MCF 10A (cell line): ENCODE measurements at regions of chr22 and their contacts with region 1.

Region 1: DNA sequence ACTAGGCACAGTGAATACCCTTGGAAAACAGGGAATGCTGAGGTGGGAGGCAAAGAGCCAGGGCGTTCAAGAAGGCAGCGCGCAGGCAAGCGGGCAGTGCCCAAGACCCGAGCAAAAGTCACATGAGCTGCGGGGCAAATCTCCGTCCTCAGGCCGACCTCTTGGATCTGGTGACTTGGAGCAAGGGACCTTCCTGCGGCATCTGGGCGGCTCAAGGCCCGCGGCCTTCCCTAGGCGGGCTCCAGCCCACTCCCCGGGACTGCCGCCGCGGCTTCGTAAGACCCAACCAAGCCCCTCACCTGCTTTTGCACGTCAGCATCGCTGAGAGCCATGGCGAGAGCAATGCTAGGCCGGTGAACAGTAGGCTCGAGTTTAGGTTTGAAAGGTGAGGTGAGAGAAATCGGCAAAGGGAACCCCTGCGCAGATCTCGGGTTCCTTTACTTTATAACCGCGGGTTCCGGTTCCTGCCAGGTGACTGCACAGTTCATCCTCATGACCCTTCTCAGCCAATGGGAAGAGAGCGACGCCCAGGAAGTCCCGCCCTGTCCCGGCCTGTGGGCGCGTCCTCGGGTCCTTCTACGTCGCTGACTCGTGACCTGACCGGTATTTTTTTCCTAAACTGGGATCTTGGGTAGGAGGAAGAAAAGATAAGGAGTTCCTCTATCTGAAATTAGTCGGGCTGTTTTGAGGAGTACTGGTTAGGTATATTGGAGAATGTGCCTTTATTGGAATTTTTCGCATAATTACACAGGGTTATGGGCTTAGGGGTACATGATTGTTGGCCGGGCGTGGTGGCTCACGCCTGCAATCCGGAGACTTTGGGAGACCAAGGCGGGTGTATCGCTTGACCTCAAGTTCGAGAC is at the start of gene ATP6V1E1:
- DNase-seq: peak; percentile 97
- H3K4me3 Mint-ChIP-seq: peak within 1 kb of the TSS; percentile 98
- H3K27ac Mint-ChIP-seq: peak within 1 kb of the TSS; percentile 98
- H3K4me1 Mint-ChIP-seq: peaks cover 7% of the 10 kb centered on the region
- H3K27me3 Mint-ChIP-seq: no peaks in the 10 kb centered on the region
- CTCF ChIP-seq: no peak
- total RNA-seq, gene ATP6V1E1: 86.4 and 114 TPM in 2 replicates

Region 2: DNA sequence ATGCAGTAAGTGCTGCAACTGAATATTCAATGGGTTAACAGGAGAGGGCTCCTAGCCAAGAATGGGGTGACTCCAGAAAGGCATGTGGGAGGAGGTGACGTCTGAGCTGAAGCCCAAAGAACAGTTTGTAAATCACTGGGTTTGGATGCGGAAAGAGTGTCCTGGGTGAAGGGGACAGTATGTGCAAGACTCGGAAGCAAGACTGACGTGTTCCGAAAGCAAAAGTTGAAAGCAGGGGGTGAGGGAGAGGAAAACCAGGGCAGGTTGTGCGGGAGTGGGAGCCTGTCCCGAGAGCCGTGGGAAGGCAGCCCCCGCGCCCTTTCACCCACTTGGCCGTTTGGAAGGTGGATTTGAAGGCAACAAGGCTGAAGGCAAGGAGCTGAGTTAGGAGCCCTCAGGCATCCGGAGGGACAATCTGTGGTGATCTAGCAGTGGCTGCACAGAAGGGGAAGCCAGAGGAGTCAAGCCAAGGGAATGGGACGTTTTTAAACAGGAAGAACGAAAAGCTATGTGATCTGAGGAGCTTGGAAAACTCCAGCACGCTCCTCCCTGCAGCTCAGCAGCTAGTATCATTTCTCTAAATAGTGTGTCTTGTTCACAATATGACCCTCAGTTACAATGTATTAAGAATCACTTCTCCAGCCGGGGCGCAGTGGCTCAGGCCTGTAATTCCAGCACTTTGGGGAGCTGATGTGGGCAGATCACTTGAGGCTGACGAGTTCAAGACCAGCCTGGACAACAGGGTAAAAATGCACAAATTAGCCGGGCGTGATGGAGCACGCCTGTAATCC is 57.5 kb before region 1 on chr22:
- CTCF ChIA-PET with region 1: interaction called, 6 read pairs
- POLR2A ChIA-PET with region 1: interaction called, 14 read pairs
- intact Hi-C with region 1: no loop called
- DNase-seq: peak; percentile 98
- H3K4me3 Mint-ChIP-seq: peak overlapping the region; percentile 67
- H3K27ac Mint-ChIP-seq: peak overlapping the region; percentile 89
- H3K4me1 Mint-ChIP-seq: peaks cover 35% of the 10 kb centered on the region
- H3K27me3 Mint-ChIP-seq: no peaks in the 10 kb centered on the region
- CTCF ChIP-seq: no peak

Region 3: DNA sequence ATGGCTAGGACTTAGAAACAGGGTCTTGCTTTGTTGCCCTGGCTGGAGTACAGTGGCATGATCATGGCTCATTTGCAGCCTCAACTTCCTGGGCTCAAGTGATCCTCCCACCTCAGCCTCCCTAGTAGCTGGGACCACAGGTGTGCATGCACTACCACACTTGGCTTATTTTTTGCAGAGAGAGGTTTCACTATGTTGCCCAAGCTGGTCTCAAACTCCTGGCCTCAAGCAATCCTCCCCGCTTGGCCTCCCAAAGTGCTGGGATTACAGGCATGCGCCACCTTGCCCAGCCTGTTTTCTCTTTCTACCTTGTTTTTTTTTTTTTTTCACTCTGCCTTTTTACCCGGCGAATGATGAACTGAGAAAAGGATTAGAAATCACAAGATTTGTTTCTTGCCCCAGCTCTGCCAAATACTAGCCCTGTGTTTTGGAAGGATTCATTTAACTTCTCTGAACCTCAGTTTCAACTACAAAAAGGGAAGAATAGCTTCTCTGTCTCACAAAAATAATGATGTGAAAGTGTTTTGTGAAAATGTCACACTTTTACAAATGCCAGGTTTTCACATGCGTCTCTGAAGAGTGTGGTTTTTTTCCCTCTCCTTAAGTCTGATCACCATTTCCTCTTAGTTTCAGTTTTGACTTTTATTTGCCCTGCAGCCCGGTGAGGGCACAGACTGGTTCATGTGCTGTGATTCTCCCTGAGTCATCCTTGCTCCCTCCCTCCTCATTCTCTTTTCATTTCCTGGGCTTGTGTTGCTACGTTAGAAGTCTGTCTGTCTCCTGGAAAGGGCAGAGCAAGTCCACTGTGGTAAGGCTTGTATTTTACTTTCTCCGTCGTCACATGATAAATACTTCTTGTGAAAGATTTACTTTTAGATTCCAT is 77.7 kb after region 1 on chr22:
- CTCF ChIA-PET with region 1: no interaction called
- POLR2A ChIA-PET with region 1: interaction called, 19 read pairs
- intact Hi-C with region 1: loop called (anchors 2 kb)
- DNase-seq: peak; percentile 92
- H3K4me3 Mint-ChIP-seq: peak overlapping the region; percentile 79
- H3K27ac Mint-ChIP-seq: peak overlapping the region; percentile 87
- H3K4me1 Mint-ChIP-seq: peaks cover 17% of the 10 kb centered on the region
- H3K27me3 Mint-ChIP-seq: no peaks in the 10 kb centered on the region
- CTCF ChIP-seq: no peak